CD14-positive monocyte (primary cell): ENCODE measurements at regions of chr6 and their contacts with region 1.

Region 1: GRCh38 chr6:142692942-142693341 is 252.0 kb downstream of the HIVEP2 start:
- DNase-seq: peak; percentile 41 to 59 (median 51)
- H3K4me3 ChIP-seq: no peak overlapping the region
- H3K4me3 Mint-ChIP-seq: no peak overlapping the region
- H3K27ac ChIP-seq: no peak overlapping the region
- H3K27ac Mint-ChIP-seq: peak overlapping the region in 2 of 7 donors; percentile 6 to 37
- H3K4me1 ChIP-seq: peaks cover 11 to 13% of the 10 kb centered on the region in 2 donors
- H3K4me1 Mint-ChIP-seq: peaks cover 19% of the 10 kb centered on the region
- H3K27me3 ChIP-seq: no peaks in the 10 kb centered on the region
- H3K27me3 Mint-ChIP-seq: peaks cover 0 to 1% (median under 1%) of the 10 kb centered on the region in 3 donors
- CTCF ChIP-seq: peak; percentile 97

Region 2: DNA sequence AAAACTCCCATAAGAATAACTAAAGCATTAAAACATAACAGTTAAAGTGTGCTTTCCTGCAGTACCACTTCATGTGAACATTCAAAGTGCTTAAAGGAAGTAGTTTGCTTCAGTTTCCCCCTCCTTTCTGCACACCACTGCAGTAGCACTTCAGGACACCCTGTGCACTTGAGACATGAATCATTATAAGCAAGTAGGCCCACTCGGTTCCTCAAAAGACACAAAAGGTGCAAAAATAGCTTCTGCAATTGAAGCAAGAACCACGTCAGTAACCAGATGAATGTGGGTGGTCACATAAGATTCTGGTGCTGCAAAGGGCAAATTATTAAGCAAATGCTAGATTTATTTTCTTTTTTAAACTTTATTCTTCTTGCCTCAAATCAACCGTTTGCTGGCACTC is 91.4 kb after region 1 on chr6:
- intact Hi-C with region 1: loop called in 1 of 2 experiments (anchors 5 kb)
- DNase-seq: peak; percentile 21 to 59 (median 36)
- H3K4me3 ChIP-seq: no peak overlapping the region
- H3K4me3 Mint-ChIP-seq: no peak overlapping the region
- H3K27ac ChIP-seq: no peak overlapping the region
- H3K27ac Mint-ChIP-seq: peak overlapping the region in 1 of 7 donors; percentile 63
- H3K4me1 ChIP-seq: no peaks in the 10 kb centered on the region
- H3K4me1 Mint-ChIP-seq: peaks cover 4% of the 10 kb centered on the region
- H3K27me3 ChIP-seq: no peaks in the 10 kb centered on the region
- H3K27me3 Mint-ChIP-seq: no peaks in the 10 kb centered on the region
- CTCF ChIP-seq: no peak

Region 3: GRCh38 chr6:143026696-143027449 is 333.9 kb after region 1 on chr6:
- intact Hi-C with region 1: loop called in 1 of 2 experiments (anchors 5 kb)
- DNase-seq: peak; percentile 22 to 47 (median 32)
- H3K4me3 ChIP-seq: no peak overlapping the region
- H3K4me3 Mint-ChIP-seq: no peak overlapping the region
- H3K27ac ChIP-seq: no peak overlapping the region
- H3K27ac Mint-ChIP-seq: no peak overlapping the region
- H3K4me1 ChIP-seq: no peaks in the 10 kb centered on the region
- H3K4me1 Mint-ChIP-seq: no peaks in the 10 kb centered on the region
- H3K27me3 ChIP-seq: no peaks in the 10 kb centered on the region
- H3K27me3 Mint-ChIP-seq: no peaks in the 10 kb centered on the region
- CTCF ChIP-seq: peak; percentile 81

Region 4: GRCh38 chr6:143427109-143427817 is 734.3 kb after region 1 on chr6:
- intact Hi-C with region 1: loop called (anchors 5 kb)
- DNase-seq: peak; percentile 33 to 59 (median 59)
- H3K4me3 ChIP-seq: no peak overlapping the region
- H3K4me3 Mint-ChIP-seq: no peak overlapping the region
- H3K27ac ChIP-seq: no peak overlapping the region
- H3K27ac Mint-ChIP-seq: no peak overlapping the region
- H3K4me1 ChIP-seq: no peaks in the 10 kb centered on the region
- H3K4me1 Mint-ChIP-seq: no peaks in the 10 kb centered on the region
- H3K27me3 ChIP-seq: no peaks in the 10 kb centered on the region
- H3K27me3 Mint-ChIP-seq: no peaks in the 10 kb centered on the region
- CTCF ChIP-seq: peak; percentile 90